Left colon (tissue), 2 donors: ENCODE measurements at regions of chr12 and their contacts with region 1.

Region 1: GRCh38 chr12:49336645-49337584 is at the start of gene C1QL4:
- DNase-seq: peak; percentile 69 to 88
- ATAC-seq: peak; percentile 79
- total RNA-seq, gene C1QL4: not detected

Region 2: GRCh38 chr12:49264738-49265515 is 72.0 kb before region 1 on chr12 and contains the start of gene TUBA1C:
- intact Hi-C with region 1: no loop called
- DNase-seq: peak; percentile 94 to 95
- ATAC-seq: peak; percentile 85
- total RNA-seq, gene TUBA1C: 260 to 267 TPM

Region 3: GRCh38 chr12:49288412-49288853 is 48.5 kb before region 1 on chr12:
- intact Hi-C with region 1: loop called in 1 of 2 experiments (anchors 5 kb)
- DNase-seq: peak in 1 of 2 donors; percentile 56
- ATAC-seq: peak; percentile 63